RWPE1 (cell line): ENCODE measurements at regions of chr11 and their contacts with region 1.

Region 1: GRCh38 chr11:33716236-33716635 is 15.6 kb upstream of the C11orf91 start:
- DNase-seq: no peak
- H3K27ac ChIP-seq: peak overlapping the region; percentile 81
- CTCF ChIP-seq: no peak; the same call in 1 of the 2 replicates

Region 2: DNA sequence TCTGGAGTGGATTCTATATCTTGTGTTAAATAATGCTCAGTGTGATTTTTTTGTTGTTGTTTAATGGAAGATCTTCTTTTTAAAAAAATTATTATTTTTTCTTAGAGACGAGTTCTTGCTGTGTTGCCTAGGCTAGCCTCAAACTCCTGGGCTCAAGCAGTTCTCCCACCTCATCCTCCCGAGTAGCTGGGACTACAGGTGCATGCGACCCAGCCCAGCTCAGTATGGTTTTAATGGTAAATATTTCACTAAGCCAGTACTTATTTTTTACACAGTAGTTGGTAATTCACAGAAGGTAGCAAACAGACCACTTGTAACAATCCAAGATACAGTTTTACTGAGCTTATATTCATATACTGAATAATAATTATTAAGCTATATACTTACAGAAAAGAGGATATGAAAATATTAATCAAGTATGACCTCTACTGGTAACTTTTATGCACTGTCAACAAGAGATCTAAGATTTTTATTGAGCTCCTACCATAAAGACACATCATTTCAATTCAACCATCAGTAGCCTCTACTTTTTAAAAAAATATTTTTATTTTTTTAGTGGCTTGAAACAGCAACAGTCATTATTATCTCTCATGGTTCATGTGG is 26.1 kb after region 1 on chr11:
- CTCF ChIA-PET with region 1: interaction called, 12 read pairs
- POLR2A ChIA-PET with region 1: no interaction called
- DNase-seq: no peak
- H3K27ac ChIP-seq: no peak overlapping the region
- CTCF ChIP-seq: peak; percentile 60

Region 3: GRCh38 chr11:34050581-34051348 is 334.5 kb after region 1 on chr11:
- CTCF ChIA-PET with region 1: interaction called, 10 read pairs
- POLR2A ChIA-PET with region 1: no interaction called
- DNase-seq: no peak
- H3K27ac ChIP-seq: peak overlapping the region; percentile 99
- CTCF ChIP-seq: no peak